ENCODE measurements at regions of chr2 and their contacts with region 1.

Region 1: DNA sequence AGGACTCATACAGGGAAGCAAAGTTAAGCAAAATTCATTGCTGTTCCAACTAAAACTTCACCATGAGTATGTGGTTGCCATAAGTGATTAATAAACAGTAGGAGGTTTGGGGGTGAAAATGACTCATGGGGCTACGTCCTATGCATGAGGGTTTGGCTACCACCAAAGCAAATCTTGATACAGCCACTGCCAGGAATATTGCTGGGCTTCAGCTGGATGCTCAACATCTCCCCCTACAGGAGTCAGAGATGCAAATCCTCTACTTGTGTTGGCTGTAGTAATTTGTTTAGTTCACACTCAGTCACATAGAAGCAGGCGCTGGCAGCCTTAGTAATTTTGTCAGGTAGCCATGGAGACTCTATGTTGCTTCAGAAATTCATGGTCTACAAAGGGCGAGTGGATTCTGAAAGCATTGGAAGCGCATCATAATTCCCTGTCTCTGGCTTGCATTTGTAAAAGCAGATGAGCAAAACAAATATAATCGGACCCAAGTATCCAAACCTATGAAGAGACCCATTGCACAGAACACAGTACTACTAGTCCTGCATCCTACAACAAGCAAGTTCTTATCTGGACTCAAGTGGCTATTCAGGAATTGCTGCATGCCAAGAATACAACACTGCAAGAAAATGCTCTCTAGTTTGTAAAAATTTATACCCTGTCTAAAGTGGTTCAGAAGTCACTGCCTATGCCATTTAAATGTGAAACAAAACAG is 76.0 kb downstream of the CD28 start:
- DNase-seq: no peak
- H3K4me3 ChIP-seq: no peak overlapping the region
- H3K27ac ChIP-seq: no peak overlapping the region
- H3K4me1 ChIP-seq: peaks cover 8 to 47% (median 41%) of the 10 kb centered on the region in 4 donors
- H3K27me3 ChIP-seq: no peaks in the 10 kb centered on the region
- CTCF ChIP-seq: peak; percentile 41 to 68 (median 45)
- EP300 ChIP-seq: no peak
- POLR2A ChIP-seq: no peak

Region 2: DNA sequence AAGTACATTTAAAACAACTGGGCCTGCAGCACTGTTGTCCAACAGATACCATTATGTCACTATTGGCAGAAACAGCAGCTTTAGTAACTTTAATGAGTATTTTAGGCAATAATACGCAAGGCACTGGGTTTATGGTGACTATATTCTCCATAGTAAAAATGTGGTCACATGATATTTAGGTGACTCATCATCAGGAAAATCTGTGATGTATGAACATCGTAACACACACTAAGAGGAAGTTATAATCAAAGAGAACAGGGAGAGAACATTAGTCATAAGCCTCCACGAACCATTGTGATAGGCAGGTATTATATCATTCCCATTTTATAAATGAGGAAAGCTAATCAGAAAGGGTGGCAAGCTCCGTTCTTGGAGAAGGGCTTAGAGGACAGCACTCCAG is 284.3 kb before region 1 on chr2:
- intact Hi-C with region 1: no loop called
- DNase-seq: no peak
- H3K4me3 ChIP-seq: no peak overlapping the region
- H3K27ac ChIP-seq: no peak overlapping the region
- H3K4me1 ChIP-seq: peaks cover 5 to 25% (median 14%) of the 10 kb centered on the region in 4 donors
- H3K27me3 ChIP-seq: no peaks in the 10 kb centered on the region
- CTCF ChIP-seq: no peak
- EP300 ChIP-seq: no peak
- POLR2A ChIP-seq: no peak

Region 3: GRCh38 chr2:203535078-203535783 is 247.2 kb before region 1 on chr2 and contains the start of gene RAPH1:
- intact Hi-C with region 1: loop called (anchors 10 kb)
- DNase-seq: no peak
- H3K4me3 ChIP-seq: peak within 1 kb of the TSS; percentile 89 to 95 (median 94)
- H3K27ac ChIP-seq: peak within 1 kb of the TSS; percentile 88 to 97 (median 93)
- H3K4me1 ChIP-seq: peaks cover 13 to 27% (median 23%) of the 10 kb centered on the region in 4 donors
- H3K27me3 ChIP-seq: no peaks in the 10 kb centered on the region
- CTCF ChIP-seq: no peak
- EP300 ChIP-seq: no peak
- POLR2A ChIP-seq: peak; percentile 38
- total RNA-seq, gene RAPH1: 15.4 to 20.4 (median 18.2) TPM